GM10248 (cell line): ENCODE measurements at regions of chr6 and their contacts with region 1.

Region 1: DNA sequence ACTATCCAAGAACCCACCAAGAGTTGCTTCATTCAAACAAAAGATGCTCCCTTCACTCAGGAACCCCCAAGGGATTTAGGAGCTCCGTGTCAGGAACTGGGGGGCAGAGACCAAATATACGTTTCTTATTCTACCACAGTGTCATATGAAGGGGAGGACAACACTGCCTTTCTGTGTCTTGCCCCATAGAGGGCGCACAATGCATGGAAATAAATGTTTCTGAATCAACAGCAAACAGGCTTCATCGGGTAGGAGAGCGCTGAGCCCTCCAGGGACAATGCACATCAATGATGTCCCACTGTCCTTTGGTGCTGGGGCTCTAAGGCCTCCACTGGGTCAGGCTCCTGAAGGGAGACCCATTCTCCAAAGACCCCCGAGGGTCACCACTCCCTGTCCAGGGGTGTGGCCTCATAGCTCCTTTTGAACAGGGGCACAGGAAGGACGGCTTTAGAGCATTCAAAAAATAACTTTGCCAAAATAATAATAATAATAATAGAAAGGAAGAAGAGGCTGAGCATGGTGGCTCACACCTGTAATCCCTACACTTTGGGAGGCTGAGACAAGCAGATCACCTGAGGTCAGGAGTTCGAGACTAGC is 31.1 kb downstream of the PLG start:
- DNase-seq: peak; percentile 43
- CTCF ChIP-seq: peak; percentile 78

Region 2: DNA sequence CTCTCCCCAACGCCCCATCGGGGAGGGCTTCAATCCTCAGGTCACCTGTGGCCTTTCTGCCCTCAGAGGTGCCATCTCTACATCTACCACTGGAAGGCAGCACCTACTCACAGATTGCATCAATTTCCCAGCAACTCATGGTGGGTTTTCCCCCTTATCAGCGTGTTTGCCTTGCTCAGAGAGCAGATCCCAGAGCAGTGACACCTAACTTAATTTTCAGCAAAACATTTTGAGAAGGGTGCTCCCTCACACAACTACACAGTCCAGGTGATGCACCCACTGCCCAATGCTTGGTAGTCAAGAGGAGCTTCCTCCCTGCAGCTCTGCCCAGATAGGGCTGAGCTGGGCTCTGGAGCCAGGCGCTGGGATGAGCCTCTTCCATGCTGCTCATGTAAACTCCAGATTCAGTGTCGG is 17.1 kb after region 1 on chr6:
- CTCF ChIA-PET with region 1: interaction called, 41 read pairs
- POLR2A ChIA-PET with region 1: no interaction called
- DNase-seq: peak; percentile 35
- CTCF ChIP-seq: peak; percentile 48

Region 3: DNA sequence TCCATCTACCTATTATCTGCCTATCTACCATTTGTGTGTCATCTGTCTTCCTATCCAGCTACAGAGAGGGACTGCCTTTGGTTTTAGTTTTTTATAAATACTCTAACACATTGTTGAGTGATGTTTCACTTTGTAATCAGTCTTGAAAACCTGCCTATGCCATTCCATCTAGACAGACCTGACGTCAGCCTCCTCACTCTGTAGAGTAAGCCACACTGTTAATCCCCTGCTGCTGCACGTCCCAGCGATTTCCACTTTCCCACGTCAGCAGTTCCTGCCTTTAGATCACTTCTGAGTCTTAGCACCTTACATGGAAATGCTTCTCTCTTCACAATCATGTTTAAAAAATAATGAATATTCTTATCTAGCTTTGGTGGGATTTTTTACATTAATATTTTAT is 23.7 kb after region 1 on chr6:
- CTCF ChIA-PET with region 1: interaction called, 18 read pairs
- POLR2A ChIA-PET with region 1: no interaction called
- DNase-seq: no peak
- CTCF ChIP-seq: no peak

Region 4: DNA sequence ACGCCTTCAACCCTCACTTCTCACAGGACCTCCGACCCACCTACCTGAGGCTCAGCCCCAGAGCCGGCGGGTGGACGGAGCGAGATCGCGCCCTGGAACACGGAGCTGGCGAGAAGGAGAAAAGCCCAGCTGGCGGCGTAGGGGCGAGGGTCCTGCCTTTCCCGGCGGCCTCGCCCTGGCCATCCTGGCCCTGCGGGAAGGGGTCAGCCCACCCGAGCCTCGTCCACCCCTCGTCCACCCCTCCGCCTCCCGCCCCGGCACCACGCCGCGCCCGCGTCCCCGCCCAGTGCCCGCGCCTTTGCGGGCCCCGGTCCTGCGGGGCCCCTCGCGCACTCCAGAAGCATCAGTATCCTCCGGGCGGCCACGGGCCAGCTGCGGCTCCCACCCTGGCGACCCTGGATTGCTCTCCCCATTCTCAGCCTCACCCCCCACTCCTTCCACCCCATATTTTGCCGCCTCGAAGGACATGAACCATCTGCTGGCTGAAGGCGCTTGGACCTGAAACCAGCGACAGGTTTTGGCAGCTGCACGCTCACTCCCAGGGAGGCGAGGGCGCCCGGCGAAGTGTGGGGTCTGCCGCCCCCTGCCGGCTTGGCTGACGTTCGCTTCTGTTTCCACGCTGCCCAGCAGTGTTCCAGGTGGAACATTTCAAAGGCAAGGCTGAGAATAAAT is 34.0 kb after region 1 on chr6:
- CTCF ChIA-PET with region 1: interaction called, 49 read pairs
- POLR2A ChIA-PET with region 1: no interaction called
- DNase-seq: peak; percentile 75
- CTCF ChIP-seq: peak; percentile 85

Region 5: DNA sequence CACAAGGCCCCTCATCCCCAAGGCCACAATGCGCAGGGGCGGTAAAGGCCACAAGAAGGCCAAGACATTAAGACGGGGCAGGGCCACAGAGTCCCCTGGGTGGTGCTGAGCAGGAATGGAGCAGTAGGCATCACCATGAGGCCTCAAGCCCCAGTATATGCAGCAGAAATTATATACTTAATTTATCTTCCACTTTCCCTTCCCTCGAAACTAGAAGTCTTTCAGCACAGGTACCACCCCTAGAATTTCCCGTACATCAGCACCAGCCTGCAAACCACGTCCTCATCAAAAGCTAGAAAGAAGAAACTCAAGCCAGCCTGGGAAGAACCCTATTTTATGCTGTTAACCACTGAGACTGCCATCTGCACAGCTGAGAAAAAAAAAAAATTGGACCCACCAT is 58.3 kb after region 1 on chr6:
- CTCF ChIA-PET with region 1: interaction called, 14 read pairs
- POLR2A ChIA-PET with region 1: no interaction called
- DNase-seq: no peak
- CTCF ChIP-seq: no peak

Region 6: GRCh38 chr6:160930547-160931377 is 197.6 kb after region 1 on chr6:
- CTCF ChIA-PET with region 1: interaction called, 14 read pairs
- POLR2A ChIA-PET with region 1: no interaction called
- DNase-seq: peak; percentile 81
- CTCF ChIP-seq: peak; percentile 92

Region 7: DNA sequence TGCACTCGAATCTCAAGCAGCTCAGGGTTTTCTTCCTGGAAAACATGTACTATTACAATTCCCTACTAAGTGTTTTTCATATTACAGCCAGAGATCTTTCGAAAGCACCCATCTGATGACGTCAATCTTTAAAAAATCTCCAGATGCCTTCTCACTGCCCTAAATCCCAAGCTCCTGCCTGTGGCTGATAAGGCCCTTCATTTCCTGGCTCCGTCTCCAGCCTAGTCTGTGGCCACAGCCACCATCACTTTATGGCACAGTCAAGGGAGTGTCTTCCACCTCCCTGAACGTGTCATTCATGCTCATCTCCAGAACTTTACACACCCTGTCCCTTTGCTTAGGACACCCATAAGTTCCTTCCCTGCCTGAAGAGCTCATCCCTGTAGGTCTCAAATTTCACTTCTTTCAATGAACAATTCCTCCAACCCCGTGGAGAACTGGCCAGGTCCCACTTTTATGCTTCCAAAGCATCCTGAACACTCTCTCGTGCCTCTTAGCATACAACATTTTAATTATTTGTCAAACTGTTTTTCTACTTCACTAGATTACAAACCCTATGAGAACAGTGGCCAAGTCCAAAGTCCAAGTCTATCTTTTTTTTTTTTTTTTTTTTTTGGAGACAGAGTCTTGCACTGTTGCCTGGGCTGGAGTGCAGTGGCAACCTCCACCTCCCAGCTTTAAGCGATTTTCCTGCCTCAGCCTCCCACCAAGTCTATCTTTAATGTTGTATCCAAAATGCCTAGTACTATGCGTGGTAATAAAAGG is 646.9 kb after region 1 on chr6:
- CTCF ChIA-PET with region 1: interaction called, 10 read pairs
- POLR2A ChIA-PET with region 1: no interaction called
- DNase-seq: no peak
- CTCF ChIP-seq: no peak